ENCODE measurements at regions of chr17 and their contacts with region 1.

Region 1: GRCh38 chr17:49603720-49604119 is 28.0 kb downstream of the NXPH3 start:
- DNase-seq: no peak
- ATAC-seq: no peak
- H3K4me3 ChIP-seq: no peak overlapping the region
- H3K27ac ChIP-seq: no peak overlapping the region
- H3K4me1 ChIP-seq: no peaks in the 10 kb centered on the region
- H3K27me3 ChIP-seq: no peaks in the 10 kb centered on the region
- CTCF ChIP-seq: no peak

Region 2: GRCh38 chr17:48522031-48522653 is 1081.6 kb before region 1 on chr17:
- CTCF ChIA-PET with region 1: no interaction called
- POLR2A ChIA-PET with region 1: no interaction called
- in situ Hi-C with region 1: no loop called
- intact Hi-C with region 1: no loop called
- DNase-seq: no peak
- ATAC-seq: 0 out of 2 replicates have a peak, but pooled peaks have one; percentile 39
- H3K4me3 ChIP-seq: no peak overlapping the region
- H3K27ac ChIP-seq: peak overlapping the region; percentile 1; the same call in 1 of the 2 replicates
- H3K4me1 ChIP-seq: peaks cover 17% of the 10 kb centered on the region
- H3K27me3 ChIP-seq: no peaks in the 10 kb centered on the region
- CTCF ChIP-seq: no peak

Region 3: DNA sequence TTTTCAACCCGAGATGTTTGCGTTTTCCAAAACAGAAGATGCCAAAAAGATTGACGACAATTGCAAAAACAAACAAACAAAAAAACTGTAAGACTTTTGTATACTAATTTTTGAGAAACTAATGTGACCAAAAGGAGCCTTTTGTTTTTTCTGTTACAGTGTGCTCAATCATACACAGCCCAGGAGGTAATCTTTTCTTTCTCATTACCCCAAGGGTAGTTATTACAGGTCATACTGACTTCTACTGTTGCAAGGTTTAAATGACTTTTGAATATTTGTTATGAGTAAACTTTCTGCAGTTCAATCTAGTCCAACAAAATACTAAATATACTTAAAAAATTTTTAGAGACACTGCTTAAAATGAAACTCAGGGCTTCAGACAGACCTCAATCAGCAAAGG is 26.4 kb after region 1 on chr17:
- CTCF ChIA-PET with region 1: interaction called, 10 read pairs
- POLR2A ChIA-PET with region 1: no interaction called
- in situ Hi-C with region 1: no loop called
- intact Hi-C with region 1: no loop called
- DNase-seq: no peak
- ATAC-seq: no peak
- H3K4me3 ChIP-seq: no peak overlapping the region
- H3K27ac ChIP-seq: no peak overlapping the region
- H3K4me1 ChIP-seq: no peaks in the 10 kb centered on the region
- H3K27me3 ChIP-seq: no peaks in the 10 kb centered on the region
- CTCF ChIP-seq: no peak